ENCODE measurements at regions of chr6 and their contacts with region 1.

Region 1: GRCh38 chr6:49856282-49856681 is 10.1 kb downstream of the CRISP1 start:
- DNase-seq: no peak
- ATAC-seq: no peak
- H3K4me3 ChIP-seq: no peak overlapping the region
- H3K27ac ChIP-seq: no peak overlapping the region
- H3K4me1 ChIP-seq: no peaks in the 10 kb centered on the region
- H3K27me3 ChIP-seq: no peaks in the 10 kb centered on the region
- CTCF ChIP-seq: no peak
- POLR2A ChIP-seq: no peak
- RAD21 ChIP-seq: no peak

Region 2: GRCh38 chr6:48817333-48818051 is 1038.8 kb before region 1 on chr6:
- CTCF ChIA-PET with region 1: no interaction called
- POLR2A ChIA-PET with region 1: no interaction called
- RAD21 ChIA-PET with region 1: no interaction called
- intact Hi-C with region 1: loop called (anchors 5 kb)
- DNase-seq: no peak
- ATAC-seq: no peak
- H3K4me3 ChIP-seq: no peak overlapping the region
- H3K27ac ChIP-seq: no peak overlapping the region
- H3K4me1 ChIP-seq: no peaks in the 10 kb centered on the region
- H3K27me3 ChIP-seq: no peaks in the 10 kb centered on the region
- CTCF ChIP-seq: no peak
- POLR2A ChIP-seq: no peak
- RAD21 ChIP-seq: no peak

Measured in HCT116 (cell line).